ENCODE measurements at regions of chr10 and their contacts with region 1.

Region 1: DNA sequence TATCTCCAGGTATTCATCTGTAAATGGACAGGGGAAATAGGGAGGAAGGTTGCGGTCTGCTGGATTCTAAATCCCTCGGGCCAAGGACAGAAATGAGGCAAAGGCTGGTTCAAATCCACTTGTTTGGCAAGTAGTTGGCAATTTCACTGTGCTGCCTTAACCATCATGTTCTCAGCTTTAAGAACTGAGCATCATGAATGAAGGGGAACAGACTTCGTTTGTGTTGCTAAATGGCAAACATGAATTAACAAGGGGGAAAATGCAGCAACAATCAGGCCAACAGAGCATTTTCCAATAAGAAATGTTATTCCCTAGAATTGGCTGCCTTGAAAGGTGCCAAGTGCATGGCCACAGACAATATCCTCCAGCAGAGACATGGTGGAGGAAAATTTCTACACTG is 36.9 kb downstream of the PARD3 start:
- DNase-seq: no peak
- ATAC-seq: no peak
- H3K4me3 ChIP-seq: no peak overlapping the region
- H3K27ac ChIP-seq: no peak overlapping the region
- H3K4me1 ChIP-seq: peaks cover 11% of the 10 kb centered on the region
- H3K27me3 ChIP-seq: no peaks in the 10 kb centered on the region
- CTCF ChIP-seq: no peak
- POLR2A ChIP-seq: no peak
- RAD21 ChIP-seq: no peak

Region 2: GRCh38 chr10:34791947-34792346 is 13.7 kb after region 1 on chr10:
- CTCF ChIA-PET with region 1: no interaction called
- POLR2A ChIA-PET with region 1: interaction called, 14 read pairs
- dilution Hi-C with region 1: no loop called
- in situ Hi-C with region 1: no loop called
- intact Hi-C with region 1: no loop called
- DNase-seq: no peak
- ATAC-seq: no peak
- H3K4me3 ChIP-seq: no peak overlapping the region
- H3K27ac ChIP-seq: no peak overlapping the region
- H3K4me1 ChIP-seq: no peaks in the 10 kb centered on the region
- H3K27me3 ChIP-seq: no peaks in the 10 kb centered on the region
- CTCF ChIP-seq: no peak
- POLR2A ChIP-seq: no peak
- RAD21 ChIP-seq: no peak

Measured in IMR-90 (cell line).